ENCODE measurements at regions of chr11 and their contacts with region 1.

Region 1: GRCh38 chr11:60841797-60842667 is at the start of gene CCDC86:
- DNase-seq: peak; percentile 98
- H3K4me3 Mint-ChIP-seq: peak within 1 kb of the TSS; percentile 79
- H3K27ac Mint-ChIP-seq: peak within 1 kb of the TSS; percentile 86
- H3K4me1 Mint-ChIP-seq: peaks cover 62% of the 10 kb centered on the region
- H3K27me3 Mint-ChIP-seq: no peaks in the 10 kb centered on the region
- total RNA-seq, gene CCDC86: 15.3 to 16.5 TPM

Region 2: GRCh38 chr11:60788401-60789125 is 53.5 kb before region 1 on chr11:
- CTCF ChIA-PET with region 1: no interaction called
- POLR2A ChIA-PET with region 1: no interaction called
- DNase-seq: no peak
- H3K4me3 Mint-ChIP-seq: no peak overlapping the region
- H3K27ac Mint-ChIP-seq: no peak overlapping the region
- H3K4me1 Mint-ChIP-seq: no peaks in the 10 kb centered on the region
- H3K27me3 Mint-ChIP-seq: peaks cover 7% of the 10 kb centered on the region

Region 3: GRCh38 chr11:60872961-60873524 is 31.0 kb after region 1 on chr11:
- CTCF ChIA-PET with region 1: interaction called, 4 read pairs
- POLR2A ChIA-PET with region 1: interaction called, 10 read pairs
- DNase-seq: no peak
- H3K4me3 Mint-ChIP-seq: no peak overlapping the region
- H3K27ac Mint-ChIP-seq: no peak overlapping the region
- H3K4me1 Mint-ChIP-seq: peaks cover 61% of the 10 kb centered on the region
- H3K27me3 Mint-ChIP-seq: no peaks in the 10 kb centered on the region

Region 4: DNA sequence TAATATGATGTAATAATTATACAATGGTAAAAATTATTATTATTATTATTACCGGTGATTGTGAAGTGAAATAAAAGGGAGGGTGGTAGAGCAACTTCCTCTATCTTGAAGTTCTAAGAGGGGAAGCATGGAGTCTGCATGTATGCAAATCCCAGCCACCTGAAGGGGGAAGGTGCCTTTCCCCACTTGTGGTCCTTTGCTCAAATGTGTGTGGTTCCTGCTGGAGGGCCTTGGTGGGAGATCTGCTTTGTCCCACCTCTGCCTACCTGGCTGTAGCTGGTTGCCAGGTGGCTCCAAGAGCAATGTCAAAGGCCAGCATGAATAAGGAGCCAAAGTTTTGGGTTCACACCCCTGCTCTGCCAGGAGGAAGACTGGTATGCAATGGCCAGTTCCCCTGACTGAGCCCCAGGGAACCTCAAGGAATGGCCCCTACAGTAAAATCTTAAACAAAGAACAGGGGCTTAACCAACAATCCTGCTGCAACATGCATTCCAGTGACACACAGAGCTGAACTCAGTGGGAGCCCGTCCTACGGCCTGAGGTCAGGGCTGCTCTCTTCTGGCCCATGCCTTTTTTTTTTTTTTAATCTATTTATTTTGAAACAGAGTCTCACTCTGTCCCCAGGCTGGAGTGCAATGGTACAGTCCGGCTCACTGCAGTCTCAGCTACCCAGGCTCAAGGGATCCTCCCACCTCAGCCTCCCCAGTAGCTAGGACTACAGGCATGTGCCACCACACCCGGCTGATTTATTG is 90.7 kb after region 1 on chr11:
- CTCF ChIA-PET with region 1: no interaction called
- POLR2A ChIA-PET with region 1: no interaction called
- DNase-seq: no peak
- H3K4me3 Mint-ChIP-seq: no peak overlapping the region
- H3K27ac Mint-ChIP-seq: no peak overlapping the region
- H3K4me1 Mint-ChIP-seq: no peaks in the 10 kb centered on the region
- H3K27me3 Mint-ChIP-seq: peaks cover 17% of the 10 kb centered on the region